Activated CD8-positive, alpha-beta T cell treated with anti-CD3 and anti-CD28 coated beads, Interleukin-2, amount 10 ng/mL, durations not matched to agents 7 days and 5 days (primary cell): ENCODE measurements at regions of chr5 and their contacts with region 1.

Region 1: GRCh38 chr5:96381526-96381925 is 51.5 kb downstream of the PCSK1 start:
- DNase-seq: no peak
- ATAC-seq: no peak
- H3K4me3 Mint-ChIP-seq: no peak overlapping the region
- H3K27ac Mint-ChIP-seq: no peak overlapping the region
- H3K4me1 Mint-ChIP-seq: no peaks in the 10 kb centered on the region
- H3K27me3 Mint-ChIP-seq: peaks cover 18% of the 10 kb centered on the region

Region 2: DNA sequence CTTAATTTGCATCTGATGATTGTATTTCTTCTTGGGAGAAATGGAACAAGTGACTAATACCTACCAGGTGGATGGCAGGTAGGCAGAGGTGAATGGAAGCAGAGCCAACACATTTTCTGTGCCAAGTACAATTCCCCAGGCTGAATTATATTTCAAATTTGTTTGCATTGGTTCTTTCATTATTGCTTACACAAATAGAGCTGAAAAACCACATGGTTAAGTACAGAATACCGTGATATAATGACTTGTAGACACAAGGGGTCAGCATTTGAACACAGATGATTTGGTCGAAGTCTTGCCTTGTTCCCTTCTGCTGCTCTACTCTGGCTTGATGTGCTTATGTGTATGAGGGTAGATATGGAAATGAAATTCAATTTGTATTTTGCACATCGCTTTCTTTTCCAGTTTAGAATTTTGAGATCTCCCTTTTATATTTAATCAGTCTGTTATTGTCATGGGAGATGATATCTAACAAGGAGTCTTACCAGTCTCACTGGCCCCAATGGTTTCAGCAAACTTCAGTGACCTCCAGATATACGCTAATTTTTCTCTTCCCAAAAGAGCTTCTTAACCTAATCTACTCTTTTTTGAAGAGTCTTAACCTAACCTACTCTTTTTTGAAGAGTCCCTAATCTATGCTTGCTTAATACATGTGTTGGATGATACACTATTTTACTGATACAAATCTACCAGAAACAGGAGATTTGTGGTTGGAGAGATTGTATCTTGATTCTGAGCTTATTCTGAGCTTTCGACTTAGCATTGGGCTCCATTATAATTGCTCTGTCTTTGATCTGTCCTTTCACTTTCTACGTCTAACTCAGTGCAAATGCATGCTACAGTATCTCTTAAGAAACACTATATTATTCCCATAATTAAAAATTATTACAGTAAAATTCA is 36.6 kb before region 1 on chr5:
- CTCF ChIA-PET with region 1: interaction called, 12 read pairs
- POLR2A ChIA-PET with region 1: no interaction called
- DNase-seq: peak; percentile 55
- ATAC-seq: peak; percentile 93
- H3K4me3 Mint-ChIP-seq: peak overlapping the region; percentile 37
- H3K27ac Mint-ChIP-seq: no peak overlapping the region
- H3K4me1 Mint-ChIP-seq: peaks cover 17% of the 10 kb centered on the region
- H3K27me3 Mint-ChIP-seq: peaks cover 9% of the 10 kb centered on the region

Region 3: DNA sequence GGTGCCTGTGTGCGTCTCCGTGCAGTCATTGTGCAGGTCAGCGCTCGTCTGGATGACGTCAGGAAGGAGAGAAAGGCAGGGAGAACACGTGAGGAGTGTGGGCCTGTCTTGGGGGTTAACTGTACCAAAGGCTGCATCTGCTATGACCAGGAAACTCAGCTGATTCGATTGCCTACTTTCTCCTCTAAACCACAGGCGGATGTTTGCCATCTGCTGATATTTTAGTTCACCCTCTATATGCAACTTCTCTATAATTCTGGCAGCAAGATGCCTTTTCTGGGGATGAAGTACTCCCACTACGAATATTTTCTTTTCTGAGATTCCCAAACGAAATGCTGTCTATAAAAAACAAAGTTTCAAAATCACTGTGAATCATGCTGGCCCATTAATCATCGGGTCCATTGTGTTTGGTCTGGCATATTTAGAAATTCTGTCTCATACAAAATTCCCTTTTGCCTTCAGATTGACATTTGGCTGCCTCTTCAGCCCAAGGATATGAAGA is 26.8 kb after region 1 on chr5:
- CTCF ChIA-PET with region 1: no interaction called
- POLR2A ChIA-PET with region 1: no interaction called
- DNase-seq: no peak
- ATAC-seq: no peak
- H3K4me3 Mint-ChIP-seq: no peak overlapping the region
- H3K27ac Mint-ChIP-seq: no peak overlapping the region
- H3K4me1 Mint-ChIP-seq: no peaks in the 10 kb centered on the region
- H3K27me3 Mint-ChIP-seq: peaks cover 11% of the 10 kb centered on the region

Region 4: DNA sequence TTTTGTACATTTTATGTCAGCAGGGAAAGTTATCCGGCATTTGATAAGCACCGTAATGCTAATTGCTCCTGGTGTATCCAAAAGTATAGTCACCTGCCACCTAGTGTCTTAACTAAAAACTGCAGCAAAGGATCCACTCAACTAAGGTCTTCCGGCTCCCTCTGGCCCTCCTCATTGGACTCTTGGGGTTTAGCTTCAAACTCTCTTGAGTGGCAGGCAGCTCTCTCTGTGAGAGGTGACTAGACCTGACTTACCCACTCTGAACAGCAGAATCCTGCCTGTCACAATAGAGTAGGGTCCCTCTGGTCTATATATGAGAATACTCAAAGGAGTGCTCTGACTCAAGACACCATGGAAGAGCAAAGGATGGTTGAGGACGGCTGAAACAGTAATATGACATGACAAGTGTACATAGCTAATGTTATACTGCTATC is 220.3 kb after region 1 on chr5:
- CTCF ChIA-PET with region 1: interaction called, 15 read pairs
- POLR2A ChIA-PET with region 1: no interaction called
- DNase-seq: peak; percentile 74
- ATAC-seq: peak; percentile 79
- H3K4me3 Mint-ChIP-seq: no peak overlapping the region
- H3K27ac Mint-ChIP-seq: no peak overlapping the region
- H3K4me1 Mint-ChIP-seq: no peaks in the 10 kb centered on the region
- H3K27me3 Mint-ChIP-seq: peaks cover 8% of the 10 kb centered on the region